Motor neuron (in vitro differentiated cells): ENCODE measurements at regions of chr10 and their contacts with region 1.

Region 1: DNA sequence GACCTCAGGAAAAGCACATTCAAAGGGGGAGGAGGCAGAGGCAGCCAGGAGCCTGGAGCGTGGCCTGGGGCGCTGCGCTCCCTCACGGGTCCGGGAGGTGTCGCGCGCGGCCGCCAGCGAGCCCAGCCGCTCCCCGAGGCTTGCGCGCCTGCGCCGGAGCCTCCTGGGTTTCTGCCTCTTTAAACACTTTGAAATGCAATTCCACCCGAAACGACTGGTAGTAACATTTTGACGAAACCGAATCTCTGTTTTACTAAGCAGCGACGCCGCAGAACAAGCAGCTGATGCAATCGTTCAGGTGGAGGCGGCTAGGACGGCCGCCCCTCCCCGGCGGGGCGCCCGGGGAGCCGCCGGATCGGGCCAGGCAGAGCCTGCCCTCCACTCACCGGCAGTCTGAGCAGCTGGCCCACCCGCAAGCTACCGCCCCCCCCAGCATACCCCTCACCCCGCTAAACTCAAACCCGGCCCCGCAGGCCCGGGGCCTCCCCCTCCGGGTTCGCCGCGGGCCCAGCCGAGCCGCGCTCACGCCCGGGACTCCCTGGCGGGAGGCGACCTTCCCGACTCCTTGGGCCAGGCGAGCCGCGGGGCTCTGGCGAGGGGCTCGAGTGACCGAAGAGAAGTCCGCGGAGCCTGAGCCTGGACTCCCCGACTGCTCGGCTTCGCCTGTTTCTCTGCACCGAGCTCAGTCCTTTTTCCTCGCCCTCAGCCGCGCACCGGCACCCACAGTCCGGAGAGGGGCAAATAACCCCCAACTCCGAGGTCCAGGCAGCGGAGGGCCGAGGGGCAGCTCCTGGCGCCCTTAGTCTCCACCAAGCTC is 3.2 kb downstream of the MKX start:
- ATAC-seq: peak; percentile 32 to 83 (median 72)
- H3K4me3 ChIP-seq: peak overlapping the region; percentile 47 to 59 (median 48)
- H3K27ac ChIP-seq: no peak overlapping the region
- H3K4me1 ChIP-seq: peaks cover 9 to 25% of the 10 kb centered on the region in 2 donors

Region 2: GRCh38 chr10:27558612-27559020 is 183.8 kb before region 1 on chr10:
- in situ Hi-C with region 1: loop called in 1 of 9 experiments (anchors 25 kb)
- ATAC-seq: peak; percentile 37 to 73 (median 52)
- H3K4me3 ChIP-seq: no peak overlapping the region
- H3K27ac ChIP-seq: no peak overlapping the region
- H3K4me1 ChIP-seq: no peaks in the 10 kb centered on the region

Region 3: GRCh38 chr10:28169525-28169924 is 427.1 kb after region 1 on chr10:
- in situ Hi-C with region 1: loop called in 1 of 9 experiments (anchors 25 kb)
- ATAC-seq: no peak
- H3K4me3 ChIP-seq: no peak overlapping the region
- H3K27ac ChIP-seq: no peak overlapping the region
- H3K4me1 ChIP-seq: peaks cover 5 to 8% of the 10 kb centered on the region in 2 donors

Region 4: GRCh38 chr10:28179006-28179742 is 436.8 kb after region 1 on chr10:
- in situ Hi-C with region 1: loop called in 2 of 9 experiments (anchors 25 kb)
- ATAC-seq: peak in 3 of 8 experiments; percentile 35 to 61 (median 53)
- H3K4me3 ChIP-seq: no peak overlapping the region
- H3K27ac ChIP-seq: no peak overlapping the region
- H3K4me1 ChIP-seq: no peaks in the 10 kb centered on the region

Region 5: GRCh38 chr10:28217848-28218247 is 475.4 kb after region 1 on chr10:
- in situ Hi-C with region 1: loop called in 1 of 9 experiments (anchors 25 kb)
- ATAC-seq: peak in 1 of 8 experiments; percentile 60
- H3K4me3 ChIP-seq: no peak overlapping the region
- H3K27ac ChIP-seq: no peak overlapping the region
- H3K4me1 ChIP-seq: no peaks in the 10 kb centered on the region